Activated CD8-positive, alpha-beta memory T cell treated with anti-CD3 and anti-CD28 coated beads, Interleukin-2, amount 10 ng/mL, durations not matched to agents 7 days and 5 days (primary cell): ENCODE measurements at regions of chr12 and their contacts with region 1.

Region 1: DNA sequence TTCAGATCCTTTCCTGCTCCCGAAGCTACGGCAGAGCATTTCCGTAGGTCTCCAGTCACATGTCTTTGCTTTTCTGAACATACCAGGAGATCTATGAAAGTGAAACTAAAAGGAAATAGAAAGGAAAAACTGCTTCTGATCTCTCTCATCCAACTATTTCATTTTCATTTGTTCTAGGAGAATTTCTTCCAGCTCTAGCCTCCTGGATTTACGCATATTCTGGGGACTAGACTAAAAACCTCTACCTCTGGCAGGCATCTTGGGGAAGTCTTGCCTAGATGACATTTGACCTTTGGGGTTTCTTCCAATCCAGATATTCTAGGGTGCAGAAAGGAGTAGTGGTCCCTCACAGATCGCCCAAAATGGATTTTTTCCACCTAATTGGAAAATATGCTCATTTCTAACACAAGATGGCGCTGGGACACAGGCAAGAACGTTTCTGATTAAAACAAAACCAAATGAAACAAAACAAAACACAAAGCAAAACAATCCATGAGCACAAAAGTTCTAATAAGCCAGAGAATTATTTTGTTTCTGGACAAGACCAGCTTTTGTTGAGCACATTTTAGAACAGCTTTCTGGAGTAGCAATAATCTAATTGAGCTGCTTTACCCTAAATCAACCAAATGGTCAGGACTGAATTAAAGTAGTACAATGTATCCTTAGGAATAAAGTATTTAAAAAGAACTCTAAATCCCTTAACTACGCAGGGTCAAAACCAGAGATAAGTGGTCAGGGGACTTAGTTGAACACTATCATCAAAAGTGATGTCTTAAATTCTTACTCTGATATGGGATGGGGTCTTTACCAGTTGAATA is 12.3 kb upstream of the PARP11 start:
- DNase-seq: peak; percentile 50
- ATAC-seq: peak; percentile 45
- H3K4me3 Mint-ChIP-seq: peak overlapping the region; percentile 0
- H3K27ac Mint-ChIP-seq: no peak overlapping the region
- H3K4me1 Mint-ChIP-seq: peaks cover 9% of the 10 kb centered on the region
- H3K27me3 Mint-ChIP-seq: peaks cover 4% of the 10 kb centered on the region

Region 2: DNA sequence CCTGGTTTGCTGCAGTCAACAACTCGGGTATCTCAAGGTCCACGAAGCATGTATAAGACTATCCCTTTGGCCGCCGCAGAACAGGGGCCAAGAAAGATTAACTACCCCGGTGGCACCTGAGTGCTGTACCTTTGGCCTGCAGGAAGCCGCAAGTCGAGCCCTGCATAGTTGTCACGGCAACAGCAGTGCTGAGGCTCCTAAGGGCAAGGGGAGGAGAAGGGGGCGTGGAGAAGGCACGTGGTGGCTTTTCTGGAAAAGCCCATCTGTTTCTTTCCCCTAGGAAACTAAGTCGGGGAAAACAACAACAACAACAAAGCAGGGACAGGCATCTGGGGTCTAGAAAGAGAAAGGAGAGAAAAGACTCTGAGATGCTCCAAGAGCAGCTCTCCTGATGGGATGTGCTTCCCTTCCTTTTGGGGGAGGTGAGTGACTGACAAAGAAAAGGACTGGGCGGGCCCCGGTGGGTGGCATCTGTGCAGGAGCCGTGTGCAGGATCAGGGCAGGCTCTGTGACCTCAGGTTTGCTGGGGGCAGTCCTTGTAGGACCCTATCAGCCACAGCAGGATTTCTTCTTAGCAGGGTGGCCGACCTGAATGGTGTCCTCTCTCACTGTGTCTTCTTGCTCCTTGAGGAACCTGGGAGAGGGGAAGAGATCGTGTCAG is 270.6 kb before region 1 on chr12:
- CTCF ChIA-PET with region 1: no interaction called
- DNase-seq: no peak
- ATAC-seq: no peak
- H3K4me3 Mint-ChIP-seq: no peak overlapping the region
- H3K27ac Mint-ChIP-seq: no peak overlapping the region
- H3K4me1 Mint-ChIP-seq: no peaks in the 10 kb centered on the region
- H3K27me3 Mint-ChIP-seq: no peaks in the 10 kb centered on the region

Region 3: DNA sequence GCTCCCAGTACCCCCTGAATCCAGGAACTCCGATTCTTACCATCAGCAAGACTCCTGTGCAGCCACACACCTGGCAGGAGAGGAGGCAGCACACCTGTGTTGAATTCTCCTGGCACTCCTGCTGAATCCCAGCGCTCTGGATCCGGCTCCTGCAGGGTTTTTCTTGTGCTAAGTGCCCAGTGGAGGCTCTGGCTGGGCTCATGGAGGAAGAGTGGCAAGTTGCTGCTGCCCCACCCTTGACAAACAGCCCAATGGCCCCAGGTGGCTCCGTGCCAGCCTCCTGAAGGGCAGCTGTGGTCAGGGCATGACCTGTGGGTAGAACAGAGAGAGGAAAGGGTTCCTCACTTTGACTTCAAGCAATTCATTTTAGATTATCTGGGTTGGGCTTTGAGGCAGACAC is 152.6 kb before region 1 on chr12:
- CTCF ChIA-PET with region 1: no interaction called
- DNase-seq: no peak
- ATAC-seq: no peak
- H3K4me3 Mint-ChIP-seq: no peak overlapping the region
- H3K27ac Mint-ChIP-seq: peak overlapping the region; percentile 15
- H3K4me1 Mint-ChIP-seq: peaks cover 41% of the 10 kb centered on the region
- H3K27me3 Mint-ChIP-seq: no peaks in the 10 kb centered on the region

Region 4: DNA sequence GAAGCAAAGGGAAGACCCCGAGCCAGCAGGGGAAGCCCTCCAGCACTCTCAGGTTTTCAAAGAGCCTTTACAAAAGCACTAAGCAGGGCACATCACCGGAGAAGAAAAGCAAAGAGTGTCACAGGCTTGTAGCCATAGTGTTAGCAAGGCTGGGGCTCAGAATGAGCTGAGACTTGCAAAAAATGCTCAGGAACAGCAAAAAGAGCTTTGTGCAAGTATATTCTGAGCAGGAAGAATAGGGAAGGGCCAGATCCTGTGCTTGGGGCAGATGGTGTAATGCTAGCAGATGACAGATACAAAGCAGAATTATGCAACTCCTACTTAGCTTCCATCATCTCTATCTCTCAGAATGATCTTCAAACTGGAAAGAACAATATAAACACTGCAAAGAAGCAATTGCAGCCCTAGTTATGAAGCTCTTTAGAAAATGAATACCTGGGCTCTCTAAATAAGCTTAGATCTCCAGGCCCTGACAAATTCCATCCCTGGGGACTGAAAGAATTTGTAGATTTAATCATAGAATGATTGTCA is 11.4 kb after region 1 on chr12:
- CTCF ChIA-PET with region 1: interaction called, 38 read pairs
- DNase-seq: no peak
- ATAC-seq: peak; percentile 50
- H3K4me3 Mint-ChIP-seq: peak overlapping the region; percentile 19
- H3K27ac Mint-ChIP-seq: peak overlapping the region; percentile 89
- H3K4me1 Mint-ChIP-seq: peaks cover 23% of the 10 kb centered on the region
- H3K27me3 Mint-ChIP-seq: no peaks in the 10 kb centered on the region

Region 5: GRCh38 chr12:3988519-3989448 is 103.3 kb after region 1 on chr12:
- CTCF ChIA-PET with region 1: interaction called, 33 read pairs
- DNase-seq: no peak
- ATAC-seq: peak; percentile 51
- H3K4me3 Mint-ChIP-seq: no peak overlapping the region
- H3K27ac Mint-ChIP-seq: peak overlapping the region; percentile 56
- H3K4me1 Mint-ChIP-seq: peaks cover 22% of the 10 kb centered on the region
- H3K27me3 Mint-ChIP-seq: peaks cover 17% of the 10 kb centered on the region

Region 6: DNA sequence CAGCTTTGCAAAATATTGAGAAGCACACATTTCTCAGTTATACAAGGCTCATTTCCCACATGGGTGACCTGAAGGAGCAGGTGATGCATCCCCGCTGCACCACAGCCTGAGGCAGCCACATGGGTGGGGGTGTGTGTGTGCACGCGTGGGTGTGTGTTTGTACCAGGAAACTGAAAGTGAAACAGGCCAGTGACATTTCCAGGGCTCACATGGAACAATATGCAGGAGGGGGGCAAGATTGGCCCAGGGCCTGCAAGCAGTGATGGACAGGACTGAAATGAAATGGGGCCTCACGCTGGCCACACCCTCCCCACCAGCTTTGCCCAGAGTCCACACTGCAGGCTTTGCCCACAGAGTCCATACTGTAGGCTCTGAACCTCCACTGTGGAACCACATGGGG is 141.9 kb after region 1 on chr12:
- CTCF ChIA-PET with region 1: no interaction called
- DNase-seq: peak; percentile 72
- ATAC-seq: peak; percentile 44
- H3K4me3 Mint-ChIP-seq: no peak overlapping the region
- H3K27ac Mint-ChIP-seq: peak overlapping the region; percentile 31
- H3K4me1 Mint-ChIP-seq: peaks cover 29% of the 10 kb centered on the region
- H3K27me3 Mint-ChIP-seq: peaks cover 13% of the 10 kb centered on the region

Region 7: DNA sequence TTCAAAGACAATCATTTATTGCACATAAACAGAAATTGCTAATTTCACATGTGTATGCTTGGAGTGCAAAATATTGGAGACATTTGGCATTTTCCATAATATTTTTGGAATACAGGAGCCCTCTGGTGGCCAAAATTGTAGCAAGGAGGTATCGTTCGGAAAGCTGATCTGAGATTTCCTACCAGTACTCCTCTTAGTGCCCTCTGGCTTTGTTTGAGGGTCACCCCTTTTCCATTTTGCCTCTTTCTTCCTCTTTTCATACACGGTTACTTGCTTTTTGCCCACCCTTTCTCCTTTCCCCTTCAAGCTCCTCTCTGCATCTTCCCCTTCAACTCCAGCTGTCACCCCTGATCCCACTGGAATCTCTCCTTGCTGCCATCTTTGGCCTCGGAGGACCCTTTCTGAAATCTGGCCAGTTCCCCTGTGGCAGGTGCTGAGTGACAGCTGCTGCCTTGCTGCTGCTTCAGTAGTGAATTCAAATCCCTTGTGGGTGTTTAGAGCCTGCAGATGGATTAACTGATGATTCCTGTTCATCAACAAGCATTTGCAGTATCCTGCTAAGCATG is 152.3 kb after region 1 on chr12:
- CTCF ChIA-PET with region 1: interaction called, 34 read pairs
- DNase-seq: no peak
- ATAC-seq: no peak
- H3K4me3 Mint-ChIP-seq: no peak overlapping the region
- H3K27ac Mint-ChIP-seq: no peak overlapping the region
- H3K4me1 Mint-ChIP-seq: peaks cover 6% of the 10 kb centered on the region
- H3K27me3 Mint-ChIP-seq: peaks cover 26% of the 10 kb centered on the region

Region 8: DNA sequence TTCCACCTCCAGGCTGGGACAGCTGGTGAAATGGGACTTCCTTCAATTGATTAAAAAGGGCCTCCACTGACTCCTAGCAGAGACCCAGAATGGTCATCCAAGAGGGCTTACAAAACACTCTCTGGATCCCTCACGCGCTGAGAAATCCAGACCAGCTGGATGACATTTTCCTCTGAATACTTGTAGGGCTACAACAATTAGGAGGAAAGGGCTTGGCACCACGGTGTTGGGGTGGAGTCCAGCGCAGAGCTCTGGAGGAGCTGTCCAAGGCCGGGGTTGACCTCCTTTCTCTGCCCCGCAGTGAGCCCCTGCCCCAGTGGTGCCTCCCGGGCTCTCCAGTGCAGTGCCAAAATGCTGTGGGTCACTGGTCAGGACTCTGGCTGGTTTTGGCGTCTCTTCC is 199.1 kb after region 1 on chr12:
- CTCF ChIA-PET with region 1: no interaction called
- DNase-seq: no peak
- ATAC-seq: no peak
- H3K4me3 Mint-ChIP-seq: no peak overlapping the region
- H3K27ac Mint-ChIP-seq: no peak overlapping the region
- H3K4me1 Mint-ChIP-seq: no peaks in the 10 kb centered on the region
- H3K27me3 Mint-ChIP-seq: peaks cover 8% of the 10 kb centered on the region